ENCODE measurements at regions of chr7 and their contacts with region 1.

Region 1: GRCh38 chr7:37181550-37181932 is 267.1 kb downstream of the ELMO1 start:
- DNase-seq: no peak
- ATAC-seq: no peak
- H3K4me3 ChIP-seq: no peak overlapping the region
- H3K4me3 Mint-ChIP-seq: no peak overlapping the region
- H3K27ac ChIP-seq: no peak overlapping the region
- H3K27ac Mint-ChIP-seq: no peak overlapping the region
- H3K4me1 ChIP-seq: no peaks in the 10 kb centered on the region
- H3K4me1 Mint-ChIP-seq: no peaks in the 10 kb centered on the region
- H3K27me3 ChIP-seq: no peaks in the 10 kb centered on the region
- H3K27me3 Mint-ChIP-seq: no peaks in the 10 kb centered on the region
- CTCF ChIP-seq: no peak

Region 2: DNA sequence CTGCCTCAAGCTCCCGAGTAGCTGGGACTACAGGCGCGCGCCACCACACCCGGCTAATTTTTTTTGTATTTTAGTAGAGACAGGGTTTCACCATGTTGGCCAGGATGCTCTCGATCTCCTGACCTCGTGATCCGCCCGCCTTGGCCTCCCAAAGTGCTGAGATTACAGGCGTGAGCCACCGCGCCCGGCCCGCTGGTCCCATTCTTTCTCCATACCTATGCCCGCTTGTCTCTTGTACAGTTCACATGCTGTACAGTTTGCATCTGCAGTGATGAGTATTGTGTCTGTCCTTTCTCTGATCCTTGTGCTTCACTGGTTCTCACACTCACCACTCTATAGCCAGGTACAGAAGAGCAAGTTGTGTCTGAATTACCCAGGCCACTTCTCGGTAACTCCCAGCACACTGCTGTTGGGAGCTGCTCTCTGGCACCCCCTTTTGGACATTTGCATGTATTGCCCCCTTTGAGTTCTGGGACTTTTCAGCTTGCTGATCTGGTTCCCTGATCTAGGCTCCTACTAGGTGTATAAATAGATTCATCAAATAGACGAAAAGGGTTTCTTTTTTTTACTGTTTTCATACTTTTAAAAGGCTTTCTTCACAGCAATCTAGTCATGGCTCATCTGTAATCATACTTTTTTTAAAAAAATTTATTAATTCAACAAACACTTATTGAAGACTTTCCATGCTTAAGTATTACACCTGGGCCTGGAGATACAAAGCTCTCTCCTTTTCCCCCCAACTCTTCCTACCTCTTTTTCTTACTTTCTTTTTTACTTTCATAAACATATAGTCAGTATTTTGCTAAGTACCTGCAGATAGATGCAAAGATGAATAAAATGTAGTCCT is 510.7 kb before region 1 on chr7:
- CTCF ChIA-PET with region 1: interaction called, 38 read pairs
- POLR2A ChIA-PET with region 1: no interaction called
- intact Hi-C with region 1: no loop called
- DNase-seq: peak; percentile 43 to 88 (median 72)
- ATAC-seq: peak; percentile 94
- H3K4me3 ChIP-seq: no peak overlapping the region
- H3K4me3 Mint-ChIP-seq: peak overlapping the region; percentile 16
- H3K27ac ChIP-seq: no peak overlapping the region
- H3K27ac Mint-ChIP-seq: peak overlapping the region; percentile 73
- H3K4me1 ChIP-seq: peaks cover 20% of the 10 kb centered on the region
- H3K4me1 Mint-ChIP-seq: peaks cover 39% of the 10 kb centered on the region
- H3K27me3 ChIP-seq: no peaks in the 10 kb centered on the region
- H3K27me3 Mint-ChIP-seq: no peaks in the 10 kb centered on the region
- CTCF ChIP-seq: peak; percentile 89

Region 3: DNA sequence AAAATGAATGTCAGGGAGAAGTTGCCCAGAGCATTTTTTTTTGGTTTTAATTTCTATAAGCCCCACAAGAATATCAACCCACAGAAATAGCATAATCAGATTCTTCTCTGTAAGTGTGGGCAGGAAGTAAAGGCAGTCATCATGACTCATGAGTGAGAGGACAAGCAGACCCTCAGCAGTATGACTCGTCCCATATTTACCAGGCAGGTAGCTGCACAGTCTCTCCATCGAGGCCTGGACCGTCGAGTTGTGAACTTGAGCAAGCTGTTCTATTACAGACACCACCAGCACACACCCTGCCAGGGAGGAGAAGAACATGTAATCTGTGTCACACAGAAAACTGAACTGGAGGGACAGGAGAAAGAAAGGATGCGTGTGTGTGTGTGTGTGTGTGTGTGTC is 495.0 kb before region 1 on chr7:
- CTCF ChIA-PET with region 1: interaction called, 34 read pairs
- POLR2A ChIA-PET with region 1: interaction called, 3 read pairs
- intact Hi-C with region 1: loop called (anchors 1 to 2 kb)
- DNase-seq: peak in 8 of 9 experiments; percentile 19 to 75 (median 58)
- ATAC-seq: peak; percentile 92
- H3K4me3 ChIP-seq: no peak overlapping the region
- H3K4me3 Mint-ChIP-seq: peak overlapping the region; percentile 5
- H3K27ac ChIP-seq: peak overlapping the region in 1 of 2 experiments; percentile 47
- H3K27ac Mint-ChIP-seq: peak overlapping the region; percentile 81
- H3K4me1 ChIP-seq: peaks cover 27% of the 10 kb centered on the region
- H3K4me1 Mint-ChIP-seq: peaks cover 77% of the 10 kb centered on the region
- H3K27me3 ChIP-seq: no peaks in the 10 kb centered on the region
- H3K27me3 Mint-ChIP-seq: no peaks in the 10 kb centered on the region
- CTCF ChIP-seq: no peak

Region 4: GRCh38 chr7:36911788-36912187 is 269.8 kb before region 1 on chr7:
- CTCF ChIA-PET with region 1: no interaction called
- POLR2A ChIA-PET with region 1: no interaction called
- intact Hi-C with region 1: loop called in 1 of 2 experiments (anchors 10 kb)
- DNase-seq: no peak
- ATAC-seq: no peak
- H3K4me3 ChIP-seq: no peak overlapping the region
- H3K4me3 Mint-ChIP-seq: no peak overlapping the region
- H3K27ac ChIP-seq: no peak overlapping the region
- H3K27ac Mint-ChIP-seq: no peak overlapping the region
- H3K4me1 ChIP-seq: no peaks in the 10 kb centered on the region
- H3K4me1 Mint-ChIP-seq: peaks cover 9% of the 10 kb centered on the region
- H3K27me3 ChIP-seq: no peaks in the 10 kb centered on the region
- H3K27me3 Mint-ChIP-seq: no peaks in the 10 kb centered on the region
- CTCF ChIP-seq: no peak

Region 5: GRCh38 chr7:37092548-37092947 is 89.0 kb before region 1 on chr7:
- CTCF ChIA-PET with region 1: no interaction called
- POLR2A ChIA-PET with region 1: no interaction called
- intact Hi-C with region 1: no loop called
- DNase-seq: peak in 1 of 9 experiments; percentile 26
- ATAC-seq: no peak
- H3K4me3 ChIP-seq: no peak overlapping the region
- H3K4me3 Mint-ChIP-seq: no peak overlapping the region
- H3K27ac ChIP-seq: no peak overlapping the region
- H3K27ac Mint-ChIP-seq: no peak overlapping the region
- H3K4me1 ChIP-seq: no peaks in the 10 kb centered on the region
- H3K4me1 Mint-ChIP-seq: peaks cover 7% of the 10 kb centered on the region
- H3K27me3 ChIP-seq: no peaks in the 10 kb centered on the region
- H3K27me3 Mint-ChIP-seq: no peaks in the 10 kb centered on the region
- CTCF ChIP-seq: no peak